Activated CD4-positive, alpha-beta memory T cell treated with anti-CD3 and anti-CD28 coated beads for 36 hours (primary cell): ENCODE measurements at regions of chr9 and their contacts with region 1.

Region 1: GRCh38 chr9:33404788-33405362 is 2.5 kb upstream of the AQP7 start:
- DNase-seq: no peak
- H3K4me3 Mint-ChIP-seq: no peak overlapping the region
- H3K27ac Mint-ChIP-seq: no peak overlapping the region
- H3K4me1 Mint-ChIP-seq: peaks cover 7% of the 10 kb centered on the region
- H3K27me3 Mint-ChIP-seq: no peaks in the 10 kb centered on the region

Region 2: GRCh38 chr9:33430942-33431341 is 26.1 kb after region 1 on chr9:
- CTCF ChIA-PET with region 1: no interaction called
- POLR2A ChIA-PET with region 1: no interaction called
- intact Hi-C with region 1: no loop called
- DNase-seq: no peak
- H3K4me3 Mint-ChIP-seq: no peak overlapping the region
- H3K27ac Mint-ChIP-seq: no peak overlapping the region
- H3K4me1 Mint-ChIP-seq: peaks cover 18% of the 10 kb centered on the region
- H3K27me3 Mint-ChIP-seq: no peaks in the 10 kb centered on the region

Region 3: DNA sequence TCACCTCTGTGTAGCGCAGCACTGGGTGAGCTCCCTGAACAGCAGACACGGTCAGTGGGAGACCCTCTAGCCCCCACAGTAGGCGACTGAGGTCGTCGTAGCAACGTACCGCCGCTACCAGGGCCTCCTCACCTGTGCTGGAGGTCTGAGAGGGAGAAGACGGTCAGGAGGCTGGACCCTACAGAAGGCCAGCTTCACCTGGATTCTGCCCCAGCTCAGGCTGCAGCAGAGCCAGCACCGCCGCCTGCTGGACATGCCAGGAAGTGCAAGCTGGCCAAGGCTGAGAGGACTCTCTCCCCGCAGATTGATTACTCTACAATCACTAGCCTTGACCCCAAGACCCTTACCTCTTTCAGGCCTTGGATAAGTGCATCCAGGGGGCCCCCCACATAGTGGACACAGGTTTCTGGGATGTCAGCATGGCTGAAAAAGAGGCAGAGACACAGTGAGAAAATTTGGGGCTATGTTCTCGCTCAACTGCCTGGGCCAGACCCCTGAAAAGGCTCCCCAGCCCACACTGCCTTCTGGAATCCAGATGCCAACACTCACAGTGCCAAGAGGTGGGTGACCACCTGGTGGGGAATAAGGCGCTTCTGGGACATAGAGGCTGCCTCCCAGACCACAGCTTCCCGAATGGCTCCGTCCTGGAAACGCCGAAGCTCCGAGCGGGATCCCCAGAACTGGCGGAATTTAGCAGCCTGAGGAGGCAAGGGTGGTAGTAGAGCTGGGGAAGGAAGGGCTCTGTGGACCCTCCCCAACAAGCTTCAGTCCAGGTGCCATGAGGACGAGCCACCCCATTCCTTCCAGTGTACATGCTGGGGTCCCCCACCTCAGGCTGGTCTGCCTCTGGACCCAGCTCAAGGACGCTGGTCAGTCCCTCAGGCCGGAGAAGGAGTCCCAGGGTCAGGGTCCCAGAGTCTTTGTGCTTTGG is 62.0 kb after region 1 on chr9:
- CTCF ChIA-PET with region 1: interaction called, 113 read pairs
- POLR2A ChIA-PET with region 1: no interaction called
- intact Hi-C with region 1: loop called (anchors 1 kb)
- DNase-seq: peak; percentile 80
- H3K4me3 Mint-ChIP-seq: no peak overlapping the region
- H3K27ac Mint-ChIP-seq: no peak overlapping the region
- H3K4me1 Mint-ChIP-seq: peaks cover 5% of the 10 kb centered on the region
- H3K27me3 Mint-ChIP-seq: no peaks in the 10 kb centered on the region